ENCODE measurements at regions of chr1 and their contacts with region 1.

Region 1: GRCh38 chr1:162612606-162613400 is 19.5 kb upstream of the DDR2 start:
- DNase-seq: peak in 1 of 5 donors; percentile 36
- ATAC-seq: peak; percentile 16 to 60 (median 43)
- H3K4me3 ChIP-seq: no peak overlapping the region
- H3K27ac ChIP-seq: peak overlapping the region in 5 of 12 donors; percentile 13 to 72 (median 40)
- H3K4me1 ChIP-seq: peaks cover 0 to 14% (median 7%) of the 10 kb centered on the region in 12 donors
- H3K27me3 ChIP-seq: no peaks in the 10 kb centered on the region
- CTCF ChIP-seq: no peak
- POLR2A ChIP-seq: no peak

Region 2: DNA sequence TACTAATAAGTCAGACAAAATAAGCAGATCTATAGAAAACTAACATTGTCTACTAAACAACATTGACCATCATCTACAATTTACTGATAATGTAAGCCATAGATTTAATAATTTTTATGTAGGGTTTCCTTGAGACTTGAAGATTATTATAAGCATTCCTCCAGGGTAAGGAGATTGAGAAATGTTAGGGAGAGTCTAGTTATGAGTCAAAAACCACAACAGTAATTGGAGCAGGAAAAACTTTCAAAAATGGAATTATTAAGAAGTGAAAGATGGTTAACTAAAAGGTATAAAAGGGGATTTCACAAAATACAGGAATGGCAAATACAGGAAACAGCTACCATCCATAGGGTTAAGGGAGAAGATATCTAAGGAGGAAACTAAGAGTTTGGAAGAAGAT is 127.6 kb before region 1 on chr1:
- intact Hi-C with region 1: no loop called
- DNase-seq: no peak
- ATAC-seq: no peak
- H3K4me3 ChIP-seq: no peak overlapping the region
- H3K27ac ChIP-seq: no peak overlapping the region
- H3K4me1 ChIP-seq: no peaks in the 10 kb centered on the region
- H3K27me3 ChIP-seq: peaks cover 0 to 11% (median 0%) of the 10 kb centered on the region in 9 donors
- CTCF ChIP-seq: no peak
- POLR2A ChIP-seq: no peak

Region 3: GRCh38 chr1:162756523-162756922 is 143.7 kb after region 1 on chr1:
- intact Hi-C with region 1: loop called in 4 of 10 experiments (anchors 5 to 10 kb)
- DNase-seq: no peak
- ATAC-seq: peak in 1 of 4 donors; percentile 26
- H3K4me3 ChIP-seq: no peak overlapping the region
- H3K27ac ChIP-seq: peak overlapping the region in 1 of 12 donors; percentile 28
- H3K4me1 ChIP-seq: no peaks in the 10 kb centered on the region
- H3K27me3 ChIP-seq: no peaks in the 10 kb centered on the region
- CTCF ChIP-seq: peak in 3 of 12 donors; percentile 8 to 13 (median 12)
- POLR2A ChIP-seq: no peak

Region 4: GRCh38 chr1:162772571-162773154 is 159.9 kb after region 1 on chr1:
- intact Hi-C with region 1: loop called in 1 of 10 experiments (anchors 10 kb)
- DNase-seq: no peak
- ATAC-seq: peak; percentile 26 to 82 (median 62)
- H3K4me3 ChIP-seq: no peak overlapping the region
- H3K27ac ChIP-seq: peak overlapping the region in 1 of 12 donors; percentile 34
- H3K4me1 ChIP-seq: no peaks in the 10 kb centered on the region
- H3K27me3 ChIP-seq: no peaks in the 10 kb centered on the region
- CTCF ChIP-seq: no peak
- POLR2A ChIP-seq: no peak

Measured in heart left ventricle (tissue), 16 donors.